Esophagus muscularis mucosa (tissue), 4 donors: ENCODE measurements at regions of chr20 and their contacts with region 1.

Region 1: GRCh38 chr20:24992487-24993205 is at the start of gene APMAP:
- DNase-seq: peak; percentile 99
- H3K4me3 ChIP-seq: peak within 1 kb of the TSS; percentile 68 to 93 (median 82)
- H3K27ac ChIP-seq: peak within 1 kb of the TSS; percentile 88 to 95 (median 93)
- H3K4me1 ChIP-seq: peaks cover 44 to 66% (median 54%) of the 10 kb centered on the region in 4 donors
- H3K27me3 ChIP-seq: no peaks in the 10 kb centered on the region
- CTCF ChIP-seq: no peak
- EP300 ChIP-seq: no peak
- POLR2A ChIP-seq: peak; percentile 94
- total RNA-seq, gene APMAP: 21.6 to 35.6 (median 32.5) TPM

Region 2: GRCh38 chr20:24773751-24774201 is 218.9 kb before region 1 on chr20:
- intact Hi-C with region 1: no loop called
- DNase-seq: no peak
- H3K4me3 ChIP-seq: no peak overlapping the region
- H3K27ac ChIP-seq: no peak overlapping the region
- H3K4me1 ChIP-seq: peaks cover 0 to 4% (median 2%) of the 10 kb centered on the region in 4 donors
- H3K27me3 ChIP-seq: peaks cover 0 to 9% (median 0%) of the 10 kb centered on the region in 4 donors
- CTCF ChIP-seq: no peak
- EP300 ChIP-seq: no peak
- POLR2A ChIP-seq: no peak

Region 3: DNA sequence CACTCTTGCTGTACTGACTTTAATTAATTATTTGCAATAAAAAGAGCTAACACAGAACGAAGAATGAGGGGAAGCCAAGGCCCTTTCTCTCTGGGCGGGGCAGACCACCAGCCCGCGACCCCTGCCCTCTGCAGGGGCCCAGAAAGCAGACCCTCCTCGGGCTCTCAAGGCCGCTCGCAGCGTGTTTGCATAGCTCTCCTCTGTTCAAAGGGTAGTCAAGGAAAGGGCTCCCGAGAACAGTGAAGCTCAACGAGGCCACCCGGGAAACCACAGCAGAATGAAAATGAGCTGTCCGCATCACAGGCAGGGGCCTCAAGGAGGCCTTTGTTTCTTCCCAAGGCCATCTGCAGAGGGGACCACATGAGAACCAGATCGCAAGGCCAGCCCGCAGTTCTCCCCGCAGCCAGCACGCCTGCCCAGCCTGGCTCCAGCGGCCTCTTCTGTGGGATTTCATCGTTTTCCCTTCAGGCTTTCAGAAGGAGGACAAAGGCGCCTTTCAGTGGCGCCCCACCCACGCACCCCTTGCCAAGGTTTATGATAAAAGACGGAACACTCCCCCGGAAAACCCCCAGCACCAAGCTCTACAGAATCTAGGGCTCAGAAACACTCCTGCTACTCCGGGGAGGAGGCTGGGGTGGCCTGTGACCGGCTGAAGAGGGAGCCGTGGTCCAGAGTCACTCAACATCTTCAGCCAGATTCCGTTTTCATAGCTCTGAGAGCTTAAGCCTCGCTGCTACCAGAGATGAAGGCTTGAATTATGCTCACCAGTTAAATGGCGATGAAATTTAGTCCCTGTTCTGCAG is 40.0 kb after region 1 on chr20:
- intact Hi-C with region 1: loop called (anchors 5 kb)
- DNase-seq: no peak
- H3K4me3 ChIP-seq: peak overlapping the region in 1 of 4 donors; percentile 7
- H3K27ac ChIP-seq: peak overlapping the region; percentile 64 to 74 (median 72)
- H3K4me1 ChIP-seq: peaks cover 72 to 78% (median 73%) of the 10 kb centered on the region in 4 donors
- H3K27me3 ChIP-seq: no peaks in the 10 kb centered on the region
- CTCF ChIP-seq: peak in 1 of 3 experiments; percentile 8
- EP300 ChIP-seq: no peak
- POLR2A ChIP-seq: no peak

Region 4: GRCh38 chr20:25178563-25179438 is 186.2 kb after region 1 on chr20:
- intact Hi-C with region 1: loop called (anchors 5 kb)
- DNase-seq: no peak
- H3K4me3 ChIP-seq: no peak overlapping the region
- H3K27ac ChIP-seq: peak overlapping the region; percentile 46 to 74 (median 62)
- H3K4me1 ChIP-seq: peaks cover 6 to 21% (median 20%) of the 10 kb centered on the region in 4 donors
- H3K27me3 ChIP-seq: no peaks in the 10 kb centered on the region
- CTCF ChIP-seq: peak; percentile 71 to 79 (median 79)
- EP300 ChIP-seq: no peak
- POLR2A ChIP-seq: no peak

Region 5: GRCh38 chr20:25247956-25248785 is 255.5 kb after region 1 on chr20 and contains the start of gene PYGB:
- intact Hi-C with region 1: loop called (anchors 10 kb)
- DNase-seq: peak; percentile 94
- H3K4me3 ChIP-seq: peak within 1 kb of the TSS; percentile 95 to 98 (median 96)
- H3K27ac ChIP-seq: peak within 1 kb of the TSS; percentile 96 to 99 (median 98)
- H3K4me1 ChIP-seq: peaks cover 43 to 62% (median 50%) of the 10 kb centered on the region in 4 donors
- H3K27me3 ChIP-seq: no peaks in the 10 kb centered on the region
- CTCF ChIP-seq: peak in 1 of 3 experiments; percentile 5
- EP300 ChIP-seq: no peak
- POLR2A ChIP-seq: peak; percentile 86
- total RNA-seq, gene PYGB: 398 to 632 (median 462) TPM

Region 6: GRCh38 chr20:25390538-25391528 is 398.2 kb after region 1 on chr20 and contains the start of gene ABHD12:
- intact Hi-C with region 1: loop called (anchors 5 kb)
- DNase-seq: peak; percentile 99
- H3K4me3 ChIP-seq: peak within 1 kb of the TSS; percentile 77 to 92 (median 90)
- H3K27ac ChIP-seq: peak within 1 kb of the TSS; percentile 92 to 98 (median 94)
- H3K4me1 ChIP-seq: peaks cover 4 to 20% (median 19%) of the 10 kb centered on the region in 4 donors
- H3K27me3 ChIP-seq: no peaks in the 10 kb centered on the region
- CTCF ChIP-seq: no peak
- EP300 ChIP-seq: no peak
- POLR2A ChIP-seq: no peak
- total RNA-seq, gene ABHD12: 27.0 to 41.6 (median 35.4) TPM